ENCODE measurements at regions of chr16 and their contacts with region 1.

Region 1: DNA sequence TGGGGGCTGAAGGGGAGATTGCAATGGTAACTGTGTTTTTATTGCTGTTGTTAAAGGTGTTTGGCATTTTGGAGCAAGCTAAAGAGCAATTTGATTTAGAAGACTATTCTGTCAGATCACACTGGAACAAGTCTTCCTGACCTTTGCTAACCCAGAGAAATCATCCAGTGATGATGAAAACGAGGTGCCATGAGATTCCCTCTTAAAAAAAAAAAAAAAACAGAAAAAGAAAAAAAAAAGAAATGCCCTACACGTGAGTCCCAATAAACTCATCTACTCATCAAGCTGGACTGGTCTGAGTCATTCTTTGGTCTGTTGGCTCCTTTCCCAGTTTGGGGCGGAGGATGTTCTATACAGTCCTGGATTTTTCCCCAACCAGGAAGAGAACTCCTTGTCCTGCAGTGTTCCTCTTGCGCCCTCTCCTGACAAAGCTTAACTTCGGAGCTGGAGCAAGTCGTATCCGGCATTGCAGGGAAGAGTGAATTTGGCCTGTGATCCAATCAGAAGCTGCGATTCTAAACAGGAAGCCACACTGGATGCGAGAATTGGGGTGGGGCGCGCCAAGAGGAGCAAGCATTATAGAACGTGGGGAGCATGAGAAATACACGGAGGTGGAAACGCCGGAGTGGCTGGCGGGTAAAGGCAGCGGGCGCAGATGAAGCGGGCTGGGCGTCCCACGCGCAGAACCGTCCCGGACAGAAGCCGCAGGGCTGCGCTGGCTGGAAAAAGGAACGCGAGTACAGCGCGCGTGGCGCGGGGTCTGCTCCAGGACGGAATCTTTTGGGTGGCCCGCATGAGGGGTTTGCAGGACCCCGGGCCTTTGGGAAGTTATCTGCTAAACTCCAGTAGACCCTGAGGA is 22.4 kb upstream of the CRYM start:
- DNase-seq: peak; percentile 100
- ATAC-seq: peak; percentile 84
- H3K4me3 ChIP-seq: peak overlapping the region; percentile 71
- H3K27ac ChIP-seq: peak overlapping the region; percentile 11; the same call in 1 of the 2 replicates
- H3K4me1 ChIP-seq: peaks cover 5% of the 10 kb centered on the region
- H3K27me3 ChIP-seq: no peaks in the 10 kb centered on the region
- CTCF ChIP-seq: peak; percentile 99
- POLR2A ChIP-seq: peak; percentile 75
- RAD21 ChIP-seq: peak; percentile 96

Region 2: GRCh38 chr16:20806168-20807050 is 494.1 kb before region 1 on chr16 and contains the starts of genes ERI2 and REXO5:
- CTCF ChIA-PET with region 1: no interaction called
- POLR2A ChIA-PET with region 1: no interaction called
- dilution Hi-C with region 1: no loop called
- in situ Hi-C with region 1: no loop called
- intact Hi-C with region 1: loop called (anchors 5 kb)
- DNase-seq: peak; percentile 94
- ATAC-seq: peak; percentile 90
- H3K4me3 ChIP-seq: peak within 1 kb of the TSS; percentile 62
- H3K27ac ChIP-seq: peak within 1 kb of the TSS; percentile 73
- H3K4me1 ChIP-seq: no peaks in the 10 kb centered on the region
- H3K27me3 ChIP-seq: no peaks in the 10 kb centered on the region
- CTCF ChIP-seq: peak; percentile 53
- POLR2A ChIP-seq: peak; percentile 79
- RAD21 ChIP-seq: peak; percentile 3; the same call in 1 of the 2 replicates
- total RNA-seq, gene ERI2: 10.2 and 15.0 TPM in 2 replicates
- total RNA-seq, gene REXO5: 6.1 and 7.0 TPM in 2 replicates

Region 3: GRCh38 chr16:21158208-21159110 is 142.1 kb before region 1 on chr16 and contains the start of gene LDAF1:
- CTCF ChIA-PET with region 1: interaction called, 15 read pairs
- POLR2A ChIA-PET with region 1: no interaction called
- dilution Hi-C with region 1: no loop called
- in situ Hi-C with region 1: loop called (anchors 5 kb)
- intact Hi-C with region 1: loop called (anchors 1 kb)
- DNase-seq: peak; percentile 63
- ATAC-seq: peak; percentile 96
- H3K4me3 ChIP-seq: peak within 1 kb of the TSS; percentile 81
- H3K27ac ChIP-seq: peak within 1 kb of the TSS; percentile 75
- H3K4me1 ChIP-seq: peaks cover 9% of the 10 kb centered on the region
- H3K27me3 ChIP-seq: no peaks in the 10 kb centered on the region
- CTCF ChIP-seq: 0 out of 2 replicates have a peak, but pooled peaks have one; percentile 5
- POLR2A ChIP-seq: no peak
- RAD21 ChIP-seq: peak; percentile 12; the same call in 1 of the 2 replicates
- total RNA-seq, gene LDAF1: 51.4 and 62.2 TPM in 2 replicates

Region 4: DNA sequence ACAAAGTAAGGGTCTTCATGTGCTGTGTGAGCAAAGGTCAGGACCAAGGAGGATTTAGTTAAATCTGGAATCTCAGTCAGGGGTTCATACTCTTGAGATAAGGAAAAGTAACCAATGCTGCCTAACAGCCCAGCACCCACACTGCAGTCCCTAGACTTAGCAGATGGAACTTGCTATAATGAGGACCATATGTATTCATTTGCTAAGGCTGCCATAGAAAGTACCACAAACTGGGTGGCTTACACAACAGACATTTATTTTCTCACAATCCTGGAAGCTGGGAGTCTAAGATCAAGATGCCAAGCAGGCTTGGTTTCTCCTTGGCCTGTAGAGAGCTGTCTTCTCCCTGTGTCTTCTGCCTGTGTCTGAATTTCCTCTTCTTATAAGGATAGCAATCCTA is 109.9 kb before region 1 on chr16:
- CTCF ChIA-PET with region 1: interaction called, 31 read pairs
- POLR2A ChIA-PET with region 1: interaction called, 17 read pairs
- dilution Hi-C with region 1: no loop called
- in situ Hi-C with region 1: loop called (anchors 5 kb)
- intact Hi-C with region 1: loop called (anchors 1 kb)
- DNase-seq: peak; percentile 11
- ATAC-seq: no peak
- H3K4me3 ChIP-seq: no peak overlapping the region
- H3K27ac ChIP-seq: no peak overlapping the region
- H3K4me1 ChIP-seq: peaks cover 6% of the 10 kb centered on the region
- H3K27me3 ChIP-seq: peaks cover 4% of the 10 kb centered on the region; the same call in 1 of the 2 replicates
- CTCF ChIP-seq: no peak
- POLR2A ChIP-seq: no peak
- RAD21 ChIP-seq: no peak

Region 5: DNA sequence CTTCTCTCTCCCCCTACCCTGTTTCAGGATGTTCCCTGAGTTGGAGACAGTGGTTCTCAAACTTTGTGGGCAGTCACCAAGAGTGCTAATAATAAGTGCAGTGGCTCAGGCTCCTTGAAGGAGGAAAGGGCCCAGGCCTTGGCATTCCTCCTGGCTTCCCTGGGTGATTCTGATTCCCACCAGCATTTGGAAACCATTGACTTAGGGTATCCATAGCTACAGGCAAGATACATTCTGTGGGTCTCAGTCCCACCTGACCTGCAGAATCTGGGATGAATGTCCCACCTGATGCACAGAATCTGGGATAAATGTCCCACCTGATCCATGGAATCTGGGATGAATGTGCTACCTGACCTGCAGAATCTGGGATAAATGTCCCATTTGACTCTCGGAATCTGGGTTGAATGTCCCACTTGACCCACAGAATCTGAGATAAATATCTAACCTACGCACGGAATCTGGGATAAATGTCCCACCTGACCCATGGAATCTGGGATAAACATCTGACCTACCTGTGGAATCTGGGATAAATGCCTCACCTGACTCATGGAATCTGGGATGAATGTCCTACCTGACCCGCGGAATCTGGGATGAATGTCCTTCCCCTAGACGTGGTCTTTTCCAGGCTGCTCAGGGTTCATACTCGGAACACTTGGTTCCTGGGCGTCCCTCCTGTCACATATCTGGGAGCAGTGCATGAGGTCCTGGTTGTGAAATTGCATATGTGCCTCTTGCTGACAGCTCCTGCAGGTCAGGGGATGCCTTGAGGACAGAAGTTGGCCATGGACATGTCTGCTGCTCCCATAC is 1376.7 kb after region 1 on chr16:
- CTCF ChIA-PET with region 1: no interaction called
- POLR2A ChIA-PET with region 1: no interaction called
- dilution Hi-C with region 1: no loop called
- in situ Hi-C with region 1: no loop called
- intact Hi-C with region 1: loop called (anchors 5 kb)
- DNase-seq: no peak
- ATAC-seq: no peak
- H3K4me3 ChIP-seq: no peak overlapping the region
- H3K27ac ChIP-seq: no peak overlapping the region
- H3K4me1 ChIP-seq: no peaks in the 10 kb centered on the region
- H3K27me3 ChIP-seq: peaks cover 46% of the 10 kb centered on the region
- CTCF ChIP-seq: no peak
- POLR2A ChIP-seq: no peak
- RAD21 ChIP-seq: no peak

Measured in IMR-90 (cell line).